ENCODE measurements at regions of chr4 and their contacts with region 1.

Region 1: DNA sequence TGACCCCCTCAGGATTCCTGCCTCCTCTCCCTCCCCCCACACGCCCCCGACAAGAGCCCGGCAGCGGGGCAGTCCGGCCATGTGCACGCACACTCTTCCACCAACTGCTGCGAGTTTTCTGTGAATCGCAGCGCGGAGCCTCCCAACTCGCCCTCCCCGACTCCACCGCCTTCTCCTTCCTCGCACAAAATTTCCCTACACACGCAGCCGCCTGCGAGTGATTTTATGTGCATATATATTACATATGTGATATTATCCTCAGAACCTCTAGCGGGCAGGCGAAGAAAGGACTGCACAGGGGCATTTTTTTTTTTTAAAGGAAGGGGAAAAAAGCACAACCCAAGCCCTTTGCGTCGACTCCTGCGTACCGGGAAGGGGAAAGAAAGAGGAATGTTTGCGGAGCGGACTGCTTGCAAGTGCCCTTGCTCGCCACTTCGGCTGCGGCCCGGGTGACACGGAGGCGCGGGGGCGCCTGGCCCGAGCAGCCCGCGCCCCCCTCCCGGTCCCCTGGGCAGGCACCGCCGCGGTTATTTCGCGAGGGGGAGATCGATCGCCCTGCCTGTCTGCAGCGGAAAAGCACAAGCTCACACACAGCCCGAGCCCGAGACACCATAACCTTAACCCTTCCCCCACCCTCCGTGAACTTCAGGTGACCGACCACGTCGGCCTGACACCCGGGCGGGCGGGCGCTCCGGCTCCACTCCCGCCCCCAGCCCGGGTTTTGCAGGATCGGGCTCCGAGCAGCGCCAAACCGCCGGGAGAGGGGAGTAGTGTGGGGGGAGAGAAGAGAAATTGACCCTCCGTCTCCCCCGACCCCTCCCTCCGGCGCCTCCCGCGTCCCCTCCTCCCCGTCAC is 2.3 kb downstream of the ZNF827 start:
- DNase-seq: peak; percentile 35 to 71 (median 66)
- ATAC-seq: peak; percentile 70
- H3K4me3 ChIP-seq: peak overlapping the region; percentile 77
- H3K4me3 Mint-ChIP-seq: peak overlapping the region; percentile 92 to 100 (median 95)
- H3K27ac ChIP-seq: peak overlapping the region; percentile 68
- H3K27ac Mint-ChIP-seq: peak overlapping the region; percentile 87 to 98 (median 93)
- H3K4me1 ChIP-seq: peaks cover 0 to 13% of the 10 kb centered on the region in 2 donors
- H3K4me1 Mint-ChIP-seq: peaks cover 26 to 49% (median 40%) of the 10 kb centered on the region in 7 donors
- H3K27me3 ChIP-seq: no peaks in the 10 kb centered on the region
- H3K27me3 Mint-ChIP-seq: peaks cover 0 to 8% (median 0%) of the 10 kb centered on the region in 5 donors

Region 2: GRCh38 chr4:144154044-144154443 is 1782.3 kb before region 1 on chr4:
- CTCF ChIA-PET with region 1: no interaction called
- POLR2A ChIA-PET with region 1: no interaction called
- intact Hi-C with region 1: no loop called
- DNase-seq: no peak
- ATAC-seq: no peak
- H3K4me3 ChIP-seq: no peak overlapping the region
- H3K4me3 Mint-ChIP-seq: no peak overlapping the region
- H3K27ac ChIP-seq: no peak overlapping the region
- H3K27ac Mint-ChIP-seq: no peak overlapping the region
- H3K4me1 ChIP-seq: no peaks in the 10 kb centered on the region
- H3K4me1 Mint-ChIP-seq: no peaks in the 10 kb centered on the region
- H3K27me3 ChIP-seq: no peaks in the 10 kb centered on the region
- H3K27me3 Mint-ChIP-seq: peaks cover 0 to 14% (median 0%) of the 10 kb centered on the region in 5 donors

Region 3: GRCh38 chr4:145097821-145098674 is 838.3 kb before region 1 on chr4 and contains the starts of genes ABCE1 and ANAPC10:
- CTCF ChIA-PET with region 1: no interaction called
- POLR2A ChIA-PET with region 1: no interaction called
- intact Hi-C with region 1: loop called (anchors 5 kb)
- DNase-seq: peak; percentile 88 to 98 (median 94)
- ATAC-seq: peak; percentile 96
- H3K4me3 ChIP-seq: peak within 1 kb of the TSS; percentile 94
- H3K4me3 Mint-ChIP-seq: peak within 1 kb of the TSS in 9 of 10 donors; percentile 93 to 98 (median 96)
- H3K27ac ChIP-seq: peak within 1 kb of the TSS; percentile 80
- H3K27ac Mint-ChIP-seq: peak within 1 kb of the TSS; percentile 95 to 99 (median 98)
- H3K4me1 ChIP-seq: peaks cover 22 to 23% of the 10 kb centered on the region in 2 donors
- H3K4me1 Mint-ChIP-seq: peaks cover 28 to 52% (median 33%) of the 10 kb centered on the region in 7 donors
- H3K27me3 ChIP-seq: no peaks in the 10 kb centered on the region
- H3K27me3 Mint-ChIP-seq: no peaks in the 10 kb centered on the region
- total RNA-seq, gene ABCE1: 43.4 to 81.3 (median 62.2) TPM
- total RNA-seq, gene ANAPC10: 13.2 to 28.0 (median 19.6) TPM

Region 4: DNA sequence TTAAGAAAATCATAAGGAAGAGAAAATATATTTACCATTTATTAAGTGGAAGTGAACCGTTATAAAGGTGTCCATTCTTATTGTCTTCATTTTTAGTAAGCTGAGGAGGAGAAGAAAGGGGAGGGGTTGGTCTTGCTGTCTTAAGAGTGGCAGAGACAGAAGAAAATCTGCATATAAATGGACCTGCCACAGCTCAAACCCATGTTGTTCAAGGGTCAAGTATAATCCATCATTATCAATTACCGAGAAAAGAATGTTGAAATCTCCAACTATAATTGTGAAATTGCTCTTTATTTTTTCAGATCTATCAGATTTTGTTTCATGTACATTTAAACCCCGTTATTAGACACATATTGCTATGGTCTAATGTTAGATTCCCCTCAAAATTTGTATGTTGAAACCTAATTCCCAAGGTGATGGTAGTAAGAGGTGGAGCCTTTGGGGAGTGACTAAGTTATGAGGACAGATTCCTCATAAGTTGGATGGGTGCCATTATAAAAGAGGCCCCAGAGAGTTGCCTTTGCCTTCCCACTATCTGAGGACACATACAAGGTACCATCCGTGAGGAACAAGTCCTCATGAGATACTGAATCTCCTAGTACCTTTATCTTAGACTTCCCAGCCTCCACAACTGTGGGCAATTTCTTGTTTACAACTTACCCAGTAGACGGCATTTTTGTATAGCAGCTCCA is 513.2 kb before region 1 on chr4:
- CTCF ChIA-PET with region 1: no interaction called
- POLR2A ChIA-PET with region 1: no interaction called
- intact Hi-C with region 1: no loop called
- DNase-seq: no peak
- ATAC-seq: no peak
- H3K4me3 ChIP-seq: no peak overlapping the region
- H3K4me3 Mint-ChIP-seq: no peak overlapping the region
- H3K27ac ChIP-seq: no peak overlapping the region
- H3K27ac Mint-ChIP-seq: no peak overlapping the region
- H3K4me1 ChIP-seq: no peaks in the 10 kb centered on the region
- H3K4me1 Mint-ChIP-seq: no peaks in the 10 kb centered on the region
- H3K27me3 ChIP-seq: peaks cover 0 to 4% of the 10 kb centered on the region in 2 donors
- H3K27me3 Mint-ChIP-seq: peaks cover 2 to 15% (median 9%) of the 10 kb centered on the region in 5 donors

Region 5: GRCh38 chr4:145808021-145808650 is 128.2 kb before region 1 on chr4:
- CTCF ChIA-PET with region 1: no interaction called
- POLR2A ChIA-PET with region 1: no interaction called
- intact Hi-C with region 1: loop called in 1 of 2 experiments (anchors 1 kb)
- DNase-seq: peak in 1 of 9 donors; percentile 43
- ATAC-seq: peak; percentile 61
- H3K4me3 ChIP-seq: no peak overlapping the region
- H3K4me3 Mint-ChIP-seq: peak overlapping the region in 2 of 10 donors; percentile 13 to 81
- H3K27ac ChIP-seq: no peak overlapping the region
- H3K27ac Mint-ChIP-seq: peak overlapping the region in 2 of 9 donors; percentile 25 to 98
- H3K4me1 ChIP-seq: no peaks in the 10 kb centered on the region
- H3K4me1 Mint-ChIP-seq: peaks cover 0 to 38% (median 0%) of the 10 kb centered on the region in 7 donors
- H3K27me3 ChIP-seq: no peaks in the 10 kb centered on the region
- H3K27me3 Mint-ChIP-seq: no peaks in the 10 kb centered on the region

Region 6: DNA sequence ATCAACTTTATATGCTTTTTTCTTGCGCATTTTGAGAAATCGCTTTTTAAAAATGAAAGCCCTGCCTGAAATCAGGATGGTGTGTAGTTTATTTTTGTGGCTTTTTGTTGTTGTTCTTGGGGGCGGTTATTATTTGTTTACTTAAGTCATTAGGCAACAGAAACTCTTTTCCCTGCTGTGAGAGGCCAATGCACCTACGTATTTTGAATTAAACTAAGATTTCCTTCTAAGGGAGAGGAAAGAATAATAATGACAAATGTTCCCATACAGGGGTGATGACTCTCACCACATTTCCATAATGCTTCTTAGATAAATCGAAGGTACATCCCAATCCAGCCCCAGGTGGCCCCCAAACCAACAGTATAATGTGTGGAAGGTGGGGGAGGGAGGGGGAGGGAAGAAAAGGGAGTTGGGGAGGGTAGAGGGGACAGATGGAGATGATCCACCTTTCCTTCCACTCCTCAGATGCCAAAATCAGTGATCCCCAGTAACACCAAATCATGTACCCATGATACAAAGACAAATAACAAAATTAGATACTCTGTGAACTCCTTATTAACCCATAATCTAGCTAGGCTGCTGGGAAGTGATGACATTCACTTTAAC is 37.3 kb before region 1 on chr4:
- CTCF ChIA-PET with region 1: no interaction called
- POLR2A ChIA-PET with region 1: no interaction called
- intact Hi-C with region 1: loop called (anchors 2 to 5 kb)
- DNase-seq: no peak
- ATAC-seq: no peak
- H3K4me3 ChIP-seq: no peak overlapping the region
- H3K4me3 Mint-ChIP-seq: no peak overlapping the region
- H3K27ac ChIP-seq: no peak overlapping the region
- H3K27ac Mint-ChIP-seq: no peak overlapping the region
- H3K4me1 ChIP-seq: peaks cover 12 to 16% of the 10 kb centered on the region in 2 donors
- H3K4me1 Mint-ChIP-seq: peaks cover 21 to 53% (median 37%) of the 10 kb centered on the region in 7 donors
- H3K27me3 ChIP-seq: no peaks in the 10 kb centered on the region
- H3K27me3 Mint-ChIP-seq: no peaks in the 10 kb centered on the region

Region 7: GRCh38 chr4:146049802-146050201 is 113.4 kb after region 1 on chr4:
- CTCF ChIA-PET with region 1: no interaction called
- POLR2A ChIA-PET with region 1: no interaction called
- intact Hi-C with region 1: no loop called
- DNase-seq: no peak
- ATAC-seq: no peak
- H3K4me3 ChIP-seq: no peak overlapping the region
- H3K4me3 Mint-ChIP-seq: no peak overlapping the region
- H3K27ac ChIP-seq: no peak overlapping the region
- H3K27ac Mint-ChIP-seq: no peak overlapping the region
- H3K4me1 ChIP-seq: no peaks in the 10 kb centered on the region
- H3K4me1 Mint-ChIP-seq: peaks cover 0 to 10% (median 0%) of the 10 kb centered on the region in 7 donors
- H3K27me3 ChIP-seq: no peaks in the 10 kb centered on the region
- H3K27me3 Mint-ChIP-seq: peaks cover 7 to 17% (median 10%) of the 10 kb centered on the region in 5 donors

Region 8: GRCh38 chr4:146175541-146176453 is 239.4 kb after region 1 on chr4 and contains the start of gene LSM6:
- CTCF ChIA-PET with region 1: no interaction called
- POLR2A ChIA-PET with region 1: no interaction called
- intact Hi-C with region 1: loop called (anchors 1 kb)
- DNase-seq: peak; percentile 63 to 86 (median 84)
- ATAC-seq: peak; percentile 94
- H3K4me3 ChIP-seq: peak within 1 kb of the TSS; percentile 87
- H3K4me3 Mint-ChIP-seq: peak within 1 kb of the TSS; percentile 88 to 95 (median 92)
- H3K27ac ChIP-seq: peak within 1 kb of the TSS; percentile 94
- H3K27ac Mint-ChIP-seq: peak within 1 kb of the TSS; percentile 82 to 99 (median 97)
- H3K4me1 ChIP-seq: peaks cover 25 to 31% of the 10 kb centered on the region in 2 donors
- H3K4me1 Mint-ChIP-seq: peaks cover 29 to 66% (median 57%) of the 10 kb centered on the region in 7 donors
- H3K27me3 ChIP-seq: no peaks in the 10 kb centered on the region
- H3K27me3 Mint-ChIP-seq: no peaks in the 10 kb centered on the region
- total RNA-seq, gene LSM6: 24.7 to 49.7 (median 46.2) TPM

Region 9: DNA sequence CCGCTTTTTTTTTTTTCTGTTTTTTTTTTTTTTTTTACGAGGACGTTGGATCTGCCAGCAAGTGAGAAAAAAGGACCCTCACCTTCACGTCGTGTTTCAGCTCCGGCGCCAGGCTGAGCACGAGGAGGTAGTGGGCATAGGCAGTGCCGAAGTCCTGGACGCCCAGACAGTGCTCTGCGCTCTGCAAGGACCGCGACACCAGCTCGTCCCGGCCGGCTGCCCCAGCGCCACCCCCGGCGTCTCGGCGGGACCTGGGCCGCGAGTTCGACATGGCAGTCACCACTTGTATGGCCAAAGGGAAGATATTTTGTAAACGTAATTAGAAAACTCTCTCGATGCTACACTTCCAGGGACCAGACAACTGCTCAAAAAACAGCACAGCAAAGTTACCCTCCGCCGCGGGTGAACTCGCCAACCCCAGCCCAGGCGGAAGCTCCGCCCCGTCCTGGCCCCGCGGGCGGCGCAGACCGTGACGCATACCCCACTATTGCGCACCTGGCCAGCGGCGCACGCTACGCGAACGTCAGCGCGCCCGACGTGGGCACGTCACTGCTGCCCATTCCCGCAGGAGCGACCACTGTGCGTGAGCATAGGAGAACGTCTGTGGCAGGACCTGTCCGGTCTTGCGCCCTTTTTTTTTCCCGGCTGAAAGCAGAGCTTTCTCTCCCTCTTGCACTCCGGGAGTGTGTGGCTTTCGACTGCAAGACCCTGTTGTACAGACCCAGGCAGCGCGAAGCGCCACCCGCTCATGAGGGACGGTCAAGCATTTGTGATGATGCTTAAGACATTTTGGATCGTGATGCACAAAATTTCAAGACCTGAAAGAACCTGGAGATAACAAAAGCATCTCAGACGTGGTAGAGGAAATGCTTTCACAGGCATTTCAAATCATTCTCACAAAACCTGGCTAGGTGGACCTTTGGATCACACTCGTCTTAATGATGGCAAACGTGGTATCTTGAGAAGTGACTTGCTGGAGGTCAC is 1747.6 kb after region 1 on chr4 and contains the start of gene PRMT9:
- CTCF ChIA-PET with region 1: no interaction called
- POLR2A ChIA-PET with region 1: no interaction called
- intact Hi-C with region 1: loop called in 1 of 2 experiments (anchors 5 kb)
- DNase-seq: peak; percentile 79 to 90 (median 85)
- ATAC-seq: peak; percentile 98
- H3K4me3 ChIP-seq: peak within 1 kb of the TSS; percentile 97
- H3K4me3 Mint-ChIP-seq: peak within 1 kb of the TSS; percentile 89 to 100 (median 97)
- H3K27ac ChIP-seq: peak within 1 kb of the TSS; percentile 95
- H3K27ac Mint-ChIP-seq: peak within 1 kb of the TSS; percentile 86 to 99 (median 97)
- H3K4me1 ChIP-seq: peaks cover 4 to 16% of the 10 kb centered on the region in 2 donors
- H3K4me1 Mint-ChIP-seq: peaks cover 15 to 47% (median 38%) of the 10 kb centered on the region in 7 donors
- H3K27me3 ChIP-seq: no peaks in the 10 kb centered on the region
- H3K27me3 Mint-ChIP-seq: peaks cover 0 to 11% (median 2%) of the 10 kb centered on the region in 5 donors
- total RNA-seq, gene PRMT9: 9.7 to 15.9 (median 10.8) TPM